Mammary epithelial cell (primary cell): ENCODE measurements at regions of chr1 and their contacts with region 1.

Region 1: GRCh38 chr1:227946624-227947385 is 927 bp downstream of the WNT9A start:
- DNase-seq: peak; percentile 85
- H3K4me3 ChIP-seq: peak overlapping the region; percentile 72 to 86 (median 78)
- H3K27ac ChIP-seq: peak overlapping the region; percentile 50
- H3K4me1 ChIP-seq: peaks cover 30% of the 10 kb centered on the region
- H3K27me3 ChIP-seq: no peaks in the 10 kb centered on the region
- CTCF ChIP-seq: peak; percentile 51 to 74

Region 2: DNA sequence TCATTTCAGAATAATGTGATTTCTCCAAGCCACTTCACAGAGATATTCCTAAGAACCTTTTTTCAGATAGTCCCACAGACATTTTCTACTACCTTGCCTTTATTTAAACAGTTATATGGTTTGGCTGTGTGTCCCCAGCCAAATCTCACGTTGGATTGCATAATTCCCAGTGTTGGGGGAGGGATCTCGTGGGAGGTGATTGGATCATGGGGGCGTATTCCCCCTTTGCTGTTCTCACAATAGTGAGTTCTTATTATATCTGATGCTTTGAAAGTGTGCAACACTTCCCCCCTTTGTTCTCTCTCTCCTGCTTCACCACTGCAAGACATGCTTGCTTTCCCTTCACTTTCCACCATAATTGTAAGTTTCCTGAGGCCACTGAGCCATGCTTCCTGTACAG is 477.1 kb before region 1 on chr1:
- CTCF ChIA-PET with region 1: no interaction called
- dilution Hi-C with region 1: no loop called
- in situ Hi-C with region 1: loop called in 1 of 2 experiments (anchors 10 kb)
- intact Hi-C with region 1: no loop called
- DNase-seq: no peak
- H3K4me3 ChIP-seq: no peak overlapping the region
- H3K27ac ChIP-seq: no peak overlapping the region
- H3K4me1 ChIP-seq: no peaks in the 10 kb centered on the region
- H3K27me3 ChIP-seq: peaks cover 4% of the 10 kb centered on the region
- CTCF ChIP-seq: no peak

Region 3: DNA sequence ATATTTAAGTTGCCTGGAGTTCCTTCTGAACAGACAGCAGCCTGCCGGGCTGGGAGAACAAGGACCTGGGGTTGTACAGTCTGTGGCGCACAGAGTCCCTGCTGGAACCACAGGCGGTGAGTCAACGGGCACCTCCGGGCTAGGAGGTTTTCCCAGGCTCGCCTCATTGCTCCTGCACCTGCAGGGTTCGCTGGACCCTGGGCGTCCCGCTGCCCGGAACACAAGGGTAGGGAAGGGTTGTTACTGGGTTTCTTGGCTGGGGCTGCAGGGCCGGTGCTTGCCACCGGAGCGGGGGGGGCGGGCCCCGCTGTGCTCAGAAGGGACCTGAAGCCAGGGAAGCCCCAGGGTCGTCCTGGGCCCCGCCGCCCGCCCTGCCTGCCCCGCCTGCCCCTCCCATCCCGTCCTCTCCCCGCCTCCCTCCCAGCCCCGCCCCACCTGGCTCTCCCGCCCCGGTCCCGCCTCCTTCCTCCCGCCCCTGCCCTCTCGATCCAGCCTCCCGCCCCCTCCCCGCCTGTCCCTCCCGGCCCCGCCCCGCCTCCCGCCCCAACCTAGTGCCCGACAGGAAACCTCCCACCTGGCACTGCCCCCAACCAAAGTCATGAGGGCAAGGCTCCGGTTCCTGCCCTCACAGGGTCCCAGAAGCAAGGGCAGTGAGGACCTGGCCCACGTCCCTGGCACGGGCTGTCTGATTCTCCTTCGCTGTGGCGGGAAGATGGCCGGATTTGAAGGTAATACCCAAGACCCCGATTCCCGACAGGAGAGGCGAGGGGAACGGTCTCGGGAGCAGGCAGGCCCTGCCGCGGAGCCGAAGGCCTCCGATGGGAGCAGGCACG is 218.5 kb before region 1 on chr1:
- CTCF ChIA-PET with region 1: no interaction called
- dilution Hi-C with region 1: no loop called
- in situ Hi-C with region 1: no loop called
- intact Hi-C with region 1: loop called (anchors 1 kb)
- DNase-seq: peak; percentile 85
- H3K4me3 ChIP-seq: peak overlapping the region; percentile 32 to 59 (median 53)
- H3K27ac ChIP-seq: no peak overlapping the region
- H3K4me1 ChIP-seq: peaks cover 20% of the 10 kb centered on the region
- H3K27me3 ChIP-seq: no peaks in the 10 kb centered on the region
- CTCF ChIP-seq: peak in 1 of 2 donors; percentile 4

Region 4: DNA sequence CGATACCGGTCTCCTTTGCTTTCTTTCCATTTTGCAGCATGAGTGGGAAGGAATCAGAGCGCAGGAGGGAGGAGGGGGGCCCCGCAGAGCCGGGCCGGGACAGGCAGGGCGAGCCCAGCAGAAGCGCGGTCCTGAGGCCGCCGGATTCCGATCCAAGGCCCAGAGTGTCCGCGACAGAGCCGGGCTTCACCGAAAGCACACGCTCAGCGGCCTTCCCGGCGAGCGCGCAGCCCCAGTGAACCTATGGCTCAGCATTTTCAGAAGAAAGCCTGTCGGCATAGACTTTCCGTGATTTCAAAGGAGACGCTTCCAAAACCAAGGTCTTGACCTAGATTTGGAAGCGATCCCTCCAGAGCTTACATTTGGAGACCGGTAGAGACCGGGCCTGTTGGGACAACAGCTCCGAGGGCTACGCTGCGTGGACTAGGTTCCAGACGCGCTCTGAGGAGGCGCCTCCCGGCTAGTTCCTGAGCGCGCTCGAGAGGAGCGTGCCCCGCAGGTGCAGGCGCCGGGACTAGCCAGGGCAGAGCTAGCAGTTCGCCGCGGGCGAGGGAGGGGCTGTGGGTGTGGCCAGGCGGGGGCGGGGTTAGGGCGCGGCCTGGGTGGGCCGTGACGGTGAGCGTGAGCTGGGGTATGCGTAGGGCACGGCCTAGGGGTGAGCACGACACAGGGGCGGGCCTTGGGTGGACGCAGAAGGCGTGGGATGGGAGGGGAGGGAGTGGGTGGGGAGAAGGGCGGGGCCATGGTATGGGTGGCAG is 159.1 kb before region 1 on chr1:
- CTCF ChIA-PET with region 1: no interaction called
- dilution Hi-C with region 1: no loop called
- in situ Hi-C with region 1: no loop called
- intact Hi-C with region 1: loop called (anchors 1 kb)
- DNase-seq: peak; percentile 96
- H3K4me3 ChIP-seq: peak overlapping the region; percentile 46 to 84 (median 69)
- H3K27ac ChIP-seq: peak overlapping the region; percentile 50
- H3K4me1 ChIP-seq: peaks cover 22% of the 10 kb centered on the region
- H3K27me3 ChIP-seq: no peaks in the 10 kb centered on the region
- CTCF ChIP-seq: no peak

Region 5: GRCh38 chr1:227895828-227896685 is 50.7 kb before region 1 on chr1:
- CTCF ChIA-PET with region 1: no interaction called
- dilution Hi-C with region 1: no loop called
- in situ Hi-C with region 1: no loop called
- intact Hi-C with region 1: loop called (anchors 5 kb)
- DNase-seq: peak; percentile 81
- H3K4me3 ChIP-seq: no peak overlapping the region
- H3K27ac ChIP-seq: peak overlapping the region; percentile 52
- H3K4me1 ChIP-seq: peaks cover 46% of the 10 kb centered on the region
- H3K27me3 ChIP-seq: no peaks in the 10 kb centered on the region
- CTCF ChIP-seq: peak in 1 of 2 donors; percentile 20

Region 6: DNA sequence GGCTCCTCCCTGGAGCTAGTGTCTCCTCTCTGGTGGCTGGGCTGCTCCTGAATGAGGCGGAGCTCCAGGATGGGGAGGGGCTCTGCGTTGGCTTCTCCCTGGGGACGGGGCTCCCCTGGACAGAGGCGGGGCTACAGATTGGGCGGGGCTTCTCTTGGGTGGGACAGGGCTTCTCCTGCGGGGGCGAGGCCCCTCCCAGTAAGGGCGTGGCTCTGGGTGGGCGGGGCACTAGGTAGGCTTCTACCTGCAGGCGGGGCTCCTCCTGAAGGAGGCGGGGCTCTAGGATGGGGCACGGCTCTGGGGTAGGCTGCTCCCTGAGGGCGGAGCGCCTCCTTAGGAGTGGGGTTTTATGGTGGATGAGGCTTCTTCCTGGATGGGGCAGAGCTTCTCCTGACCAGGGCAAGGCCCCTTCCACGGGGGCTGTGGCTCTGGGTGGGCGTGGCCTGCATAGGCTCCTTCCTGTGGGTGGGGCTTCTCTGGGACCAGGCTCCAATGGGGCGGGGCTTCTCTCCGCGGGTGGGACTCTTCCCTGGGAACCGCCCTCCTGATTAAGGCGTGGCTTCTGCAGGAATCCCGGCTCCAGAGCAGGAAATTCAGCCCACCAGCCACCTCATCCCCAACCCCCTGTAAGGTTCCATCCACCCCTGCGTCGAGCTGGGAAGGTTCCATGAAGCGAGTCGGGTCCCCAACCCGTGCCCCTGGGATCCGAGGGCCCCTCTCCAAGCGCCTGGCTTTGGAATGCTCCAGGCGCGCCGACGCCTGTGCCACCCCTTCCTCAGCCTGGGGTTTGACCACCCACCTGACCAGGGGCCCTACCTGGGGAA is 113.0 kb after region 1 on chr1:
- CTCF ChIA-PET with region 1: no interaction called
- dilution Hi-C with region 1: no loop called
- in situ Hi-C with region 1: no loop called
- intact Hi-C with region 1: no loop called
- DNase-seq: peak; percentile 84
- H3K4me3 ChIP-seq: peak overlapping the region in 2 of 3 experiments; percentile 44 to 46
- H3K27ac ChIP-seq: no peak overlapping the region
- H3K4me1 ChIP-seq: peaks cover 15% of the 10 kb centered on the region
- H3K27me3 ChIP-seq: peaks cover 19% of the 10 kb centered on the region
- CTCF ChIP-seq: no peak